ENCODE measurements at regions of chrX and their contacts with region 1.

Region 1: GRCh38 chrX:70030301-70030767 is 19.4 kb downstream of the AWAT2 start:
- DNase-seq: peak in 1 of 2 experiments; percentile 53
- H3K4me3 ChIP-seq: no peak overlapping the region
- H3K4me3 Mint-ChIP-seq: no peak overlapping the region
- H3K27ac Mint-ChIP-seq: no peak overlapping the region
- H3K4me1 ChIP-seq: no peaks in the 10 kb centered on the region
- H3K4me1 Mint-ChIP-seq: no peaks in the 10 kb centered on the region
- H3K27me3 ChIP-seq: no peaks in the 10 kb centered on the region
- H3K27me3 Mint-ChIP-seq: no peaks in the 10 kb centered on the region
- CTCF ChIP-seq: peak; percentile 50 to 62

Region 2: GRCh38 chrX:69493193-69493592 is 537.1 kb before region 1 on chrX:
- CTCF ChIA-PET with region 1: no interaction called
- POLR2A ChIA-PET with region 1: no interaction called
- intact Hi-C with region 1: loop called (anchors 1 kb)
- DNase-seq: peak; percentile 42 to 64
- H3K4me3 ChIP-seq: no peak overlapping the region
- H3K4me3 Mint-ChIP-seq: no peak overlapping the region
- H3K27ac Mint-ChIP-seq: no peak overlapping the region
- H3K4me1 ChIP-seq: no peaks in the 10 kb centered on the region
- H3K4me1 Mint-ChIP-seq: no peaks in the 10 kb centered on the region
- H3K27me3 ChIP-seq: no peaks in the 10 kb centered on the region; the same call in 1 of the 2 replicates
- H3K27me3 Mint-ChIP-seq: peaks cover 8% of the 10 kb centered on the region
- CTCF ChIP-seq: peak; percentile 35 to 53

Region 3: GRCh38 chrX:70052895-70053615 is 22.7 kb after region 1 on chrX:
- CTCF ChIA-PET with region 1: no interaction called
- POLR2A ChIA-PET with region 1: no interaction called
- intact Hi-C with region 1: no loop called
- DNase-seq: no peak
- H3K4me3 ChIP-seq: no peak overlapping the region
- H3K4me3 Mint-ChIP-seq: no peak overlapping the region
- H3K27ac Mint-ChIP-seq: no peak overlapping the region
- H3K4me1 ChIP-seq: no peaks in the 10 kb centered on the region
- H3K4me1 Mint-ChIP-seq: no peaks in the 10 kb centered on the region
- H3K27me3 ChIP-seq: no peaks in the 10 kb centered on the region
- H3K27me3 Mint-ChIP-seq: peaks cover 5% of the 10 kb centered on the region
- CTCF ChIP-seq: no peak

Region 4: GRCh38 chrX:70096052-70096451 is 65.7 kb after region 1 on chrX:
- CTCF ChIA-PET with region 1: no interaction called
- POLR2A ChIA-PET with region 1: no interaction called
- intact Hi-C with region 1: loop called (anchors 5 kb)
- DNase-seq: peak in 1 of 2 experiments; percentile 2
- H3K4me3 ChIP-seq: no peak overlapping the region
- H3K4me3 Mint-ChIP-seq: no peak overlapping the region
- H3K27ac Mint-ChIP-seq: no peak overlapping the region
- H3K4me1 ChIP-seq: no peaks in the 10 kb centered on the region
- H3K4me1 Mint-ChIP-seq: no peaks in the 10 kb centered on the region
- H3K27me3 ChIP-seq: no peaks in the 10 kb centered on the region
- H3K27me3 Mint-ChIP-seq: peaks cover 5% of the 10 kb centered on the region
- CTCF ChIP-seq: no peak

Region 5: GRCh38 chrX:70168238-70169188 is 138.2 kb after region 1 on chrX:
- CTCF ChIA-PET with region 1: no interaction called
- POLR2A ChIA-PET with region 1: no interaction called
- intact Hi-C with region 1: no loop called
- DNase-seq: peak; percentile 25 to 29
- H3K4me3 ChIP-seq: no peak overlapping the region
- H3K4me3 Mint-ChIP-seq: peak overlapping the region; percentile 61
- H3K27ac Mint-ChIP-seq: peak overlapping the region; percentile 82
- H3K4me1 ChIP-seq: peaks cover 14% of the 10 kb centered on the region
- H3K4me1 Mint-ChIP-seq: no peaks in the 10 kb centered on the region
- H3K27me3 ChIP-seq: no peaks in the 10 kb centered on the region
- H3K27me3 Mint-ChIP-seq: no peaks in the 10 kb centered on the region
- CTCF ChIP-seq: no peak